ENCODE measurements at regions of chr5 and their contacts with region 1.

Region 1: DNA sequence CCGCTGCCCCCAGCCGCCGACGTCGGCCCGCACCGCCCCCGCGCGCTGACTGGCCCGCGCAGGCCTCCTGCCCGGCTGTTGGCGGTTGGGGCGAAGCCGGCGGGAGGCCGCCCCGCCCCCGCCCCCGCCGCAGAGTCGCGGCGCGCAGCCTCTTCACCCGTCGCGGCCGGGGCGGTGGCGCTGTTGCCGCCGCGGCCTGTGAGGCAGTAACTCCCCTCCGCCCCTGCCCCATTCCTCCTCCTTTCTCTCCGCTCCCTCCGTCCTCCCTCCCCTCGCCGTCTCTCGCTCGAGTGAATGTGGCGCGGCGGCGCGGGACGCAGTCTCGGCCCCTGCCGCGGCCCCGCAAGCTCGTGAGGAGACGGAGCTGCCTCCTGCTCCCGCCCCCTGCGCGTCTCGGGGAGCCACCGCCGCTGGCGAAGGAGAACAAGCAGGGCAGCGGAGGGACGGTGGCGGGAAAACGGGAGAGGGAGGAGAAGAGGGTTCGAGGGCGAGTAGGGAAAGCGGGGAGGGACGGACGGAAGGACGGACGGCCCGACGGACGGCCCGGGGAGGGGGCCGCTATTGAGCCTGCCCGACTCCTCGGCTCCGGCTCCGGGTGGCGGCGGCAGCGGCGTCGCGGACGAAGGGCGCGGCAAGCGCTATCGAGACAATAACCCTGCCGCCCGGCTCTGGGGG is 637 bp upstream of the ERBIN start:
- DNase-seq: peak; percentile 75 to 97 (median 91)

Region 2: DNA sequence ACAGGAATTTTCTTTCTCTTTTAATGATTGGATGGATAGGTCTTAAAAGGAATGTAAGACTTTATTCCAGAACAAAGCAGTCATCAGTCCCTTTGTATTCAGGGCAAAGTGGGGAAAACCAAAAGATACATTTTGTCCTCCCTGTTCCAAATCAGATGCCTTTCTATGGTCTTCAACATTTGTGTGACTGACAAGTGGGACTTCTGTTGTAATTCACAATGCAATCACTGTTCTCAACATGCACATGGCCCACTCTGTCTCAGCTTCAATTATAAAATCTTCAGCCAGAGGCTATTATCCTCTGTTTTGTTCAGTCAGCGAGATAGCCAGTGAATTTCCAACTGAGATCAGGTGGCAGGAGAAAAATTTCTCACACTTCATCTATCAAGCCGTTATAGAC is 94.9 kb before region 1 on chr5:
- intact Hi-C with region 1: loop called (anchors 2 kb)
- DNase-seq: peak in 25 of 42 donors; percentile 21 to 85 (median 58)

Region 3: GRCh38 chr5:66144074-66144833 is 218.5 kb after region 1 on chr5 and contains the start of gene SREK1:
- intact Hi-C with region 1: loop called (anchors 2 kb)
- DNase-seq: peak; percentile 85 to 97 (median 93)

Region 4: DNA sequence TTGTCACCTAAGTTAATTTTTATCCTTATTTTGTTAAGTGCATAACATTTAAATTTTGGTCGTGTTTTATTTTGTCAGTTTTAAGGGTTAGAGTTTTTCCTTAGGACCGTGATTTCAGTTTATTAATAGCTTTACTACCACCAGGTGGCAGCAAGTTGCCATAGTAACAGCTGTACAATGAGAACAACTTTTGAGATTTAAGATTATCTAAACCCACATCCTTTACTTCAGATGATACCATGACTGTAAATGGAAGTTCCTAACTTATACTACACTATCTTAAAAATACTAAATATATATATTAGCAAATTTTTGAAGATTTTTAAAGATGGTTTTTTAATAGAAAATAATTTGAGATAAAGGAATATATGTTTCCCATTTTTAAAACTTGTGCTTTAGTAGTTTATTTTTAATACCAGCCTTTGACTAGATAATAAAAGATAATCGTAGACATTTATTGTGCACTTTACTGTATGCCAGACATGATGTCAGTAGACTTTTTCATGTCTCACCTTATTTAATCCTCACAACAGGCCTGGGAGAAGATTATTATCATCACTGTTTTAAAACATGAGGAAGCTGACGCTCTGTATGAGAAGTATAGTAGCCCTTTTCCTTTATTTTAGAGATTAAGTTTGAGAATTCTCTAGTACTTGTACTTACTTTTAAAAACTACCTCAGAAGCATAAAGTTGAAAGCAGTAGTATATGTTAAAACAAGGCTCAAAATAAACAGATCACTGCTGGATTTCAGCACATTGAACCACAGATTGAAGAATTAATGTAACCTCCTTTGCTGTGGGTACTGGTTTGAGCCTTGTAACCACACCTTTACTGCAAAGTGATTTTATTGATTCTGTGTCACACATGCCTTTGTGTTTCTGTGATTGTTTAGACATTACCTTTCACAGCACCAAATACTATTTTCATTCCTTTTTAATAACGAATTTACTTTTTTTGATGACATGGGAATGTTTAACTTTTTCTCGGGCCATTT is 245.9 kb after region 1 on chr5:
- intact Hi-C with region 1: no loop called
- DNase-seq: peak in 25 of 42 donors; percentile 13 to 79 (median 44)